Panc1 (cell line): ENCODE measurements at regions of chr1 and their contacts with region 1.

Region 1: DNA sequence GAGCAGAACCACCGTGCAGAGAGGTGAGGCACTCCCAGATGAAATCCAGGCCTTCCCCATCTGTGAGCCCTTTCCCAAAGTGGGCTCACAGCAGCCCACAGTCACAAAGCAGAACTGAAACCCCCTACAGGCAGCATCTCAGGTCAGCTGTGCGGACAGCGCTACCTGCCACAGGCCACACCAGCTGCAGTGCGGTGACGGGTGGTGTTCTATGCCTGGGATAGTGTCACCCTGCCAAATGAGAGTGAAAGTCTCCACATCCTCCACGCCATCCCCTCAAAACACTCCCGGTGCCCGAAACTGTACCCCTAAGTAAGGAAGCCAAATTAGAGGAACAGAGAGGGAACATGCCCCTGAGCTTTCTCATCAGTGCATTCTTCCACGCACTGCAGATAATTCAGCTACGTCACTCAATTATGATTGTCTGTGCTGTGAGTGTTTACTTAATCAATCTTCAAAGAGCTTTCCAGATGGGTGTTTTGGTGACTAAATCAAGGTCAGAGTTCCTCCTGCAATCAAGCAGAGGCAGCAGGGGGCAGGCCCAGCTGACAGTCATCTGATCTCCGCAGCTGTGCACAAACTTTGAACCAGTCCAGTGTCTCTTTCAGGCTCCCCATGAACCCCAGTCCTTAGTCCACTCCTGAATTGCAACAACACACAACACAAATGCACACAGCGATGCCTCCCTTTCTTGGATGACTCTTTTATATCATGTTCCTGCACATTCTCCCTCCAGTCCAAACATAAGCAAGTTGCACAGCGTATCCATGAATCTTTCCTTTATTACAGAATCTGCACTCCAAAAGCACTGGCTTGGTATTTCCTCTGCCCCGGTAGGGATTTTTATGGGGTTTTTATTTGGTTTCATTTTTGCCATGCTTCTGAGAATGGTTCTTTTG is 150.0 kb downstream of the TOMM20 start:
- DNase-seq: no peak
- ATAC-seq: peak; percentile 66
- H3K4me3 ChIP-seq: peak overlapping the region in 1 of 2 experiments; percentile 3; a peak in 2 of 4 replicates
- H3K27ac ChIP-seq: peak overlapping the region; percentile 100
- H3K4me1 ChIP-seq: peaks cover 92% of the 10 kb centered on the region
- H3K27me3 ChIP-seq: no peaks in the 10 kb centered on the region
- CTCF ChIP-seq: no peak

Region 2: DNA sequence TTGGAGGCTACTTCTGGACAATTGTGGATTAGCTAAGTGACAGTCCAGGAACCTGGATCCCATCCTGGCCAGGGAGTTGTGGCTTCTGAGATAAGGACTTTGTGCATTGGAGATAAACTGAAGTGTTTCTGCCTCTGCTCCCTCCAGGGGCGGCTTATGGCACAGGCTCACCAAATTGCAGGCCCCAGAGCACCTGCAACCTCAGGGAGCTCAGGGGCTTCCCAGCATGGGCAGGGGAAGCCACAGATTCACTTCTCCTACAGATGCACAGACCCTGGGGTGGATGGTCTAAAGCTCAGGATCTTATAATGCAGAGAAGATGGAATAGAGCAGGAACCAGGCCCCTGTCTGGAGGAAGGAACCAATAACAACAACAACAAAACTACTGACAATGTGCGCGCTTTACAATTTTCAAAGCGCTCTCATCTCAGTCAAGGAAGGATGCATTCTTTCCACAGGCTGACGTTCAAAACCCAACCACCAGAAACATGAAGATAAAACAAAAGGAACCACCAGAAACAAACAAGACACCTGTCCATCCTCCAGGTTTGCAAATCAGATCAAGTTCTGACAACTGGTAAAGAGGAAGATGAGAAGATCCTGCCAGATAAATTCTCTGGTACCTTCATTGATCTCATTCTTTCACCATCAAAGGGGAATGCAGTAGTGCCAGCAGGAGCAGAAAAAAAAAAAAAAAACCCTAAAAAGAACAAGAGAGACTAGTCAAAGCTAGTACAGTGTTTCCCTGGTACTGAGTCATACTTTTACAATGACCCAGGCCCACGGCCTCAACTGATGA is 247.7 kb before region 1 on chr1:
- CTCF ChIA-PET with region 1: no interaction called
- POLR2A ChIA-PET with region 1: no interaction called
- in situ Hi-C with region 1: loop called (anchors 25 kb)
- intact Hi-C with region 1: no loop called
- DNase-seq: no peak
- ATAC-seq: peak; percentile 12
- H3K4me3 ChIP-seq: no peak overlapping the region
- H3K27ac ChIP-seq: peak overlapping the region; percentile 95
- H3K4me1 ChIP-seq: peaks cover 39% of the 10 kb centered on the region
- H3K27me3 ChIP-seq: no peaks in the 10 kb centered on the region
- CTCF ChIP-seq: no peak

Region 3: GRCh38 chr1:235045034-235045720 is 66.5 kb after region 1 on chr1:
- CTCF ChIA-PET with region 1: no interaction called
- POLR2A ChIA-PET with region 1: interaction called, 12 read pairs
- in situ Hi-C with region 1: no loop called
- intact Hi-C with region 1: no loop called
- DNase-seq: no peak
- ATAC-seq: no peak; the same call in 1 of the 2 replicates
- H3K4me3 ChIP-seq: no peak overlapping the region
- H3K27ac ChIP-seq: peak overlapping the region; percentile 67
- H3K4me1 ChIP-seq: peaks cover 18% of the 10 kb centered on the region
- H3K27me3 ChIP-seq: no peaks in the 10 kb centered on the region
- CTCF ChIP-seq: no peak

Region 4: DNA sequence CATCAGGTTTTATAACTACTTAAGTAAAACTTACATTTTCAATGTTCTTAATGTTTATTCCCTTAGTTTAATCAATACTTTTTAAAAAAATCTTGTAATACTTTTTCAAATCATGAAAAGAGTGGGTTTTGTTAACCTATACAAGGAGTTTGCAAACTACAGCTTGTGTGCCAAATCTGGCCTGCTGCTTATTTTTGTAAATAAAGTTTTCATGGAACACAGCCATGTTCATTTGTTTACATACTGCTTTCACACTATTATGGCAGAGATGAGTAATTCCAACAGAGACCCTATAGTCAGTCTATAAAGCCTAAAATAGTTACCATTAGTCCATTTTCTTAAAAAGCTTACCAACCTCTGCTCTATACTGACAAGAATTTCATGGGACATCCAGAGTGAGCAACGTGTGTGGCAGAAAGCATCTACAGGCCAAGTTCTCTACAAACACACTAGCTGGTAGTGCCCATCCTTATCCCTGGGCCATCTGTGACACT is 1260.5 kb after region 1 on chr1:
- CTCF ChIA-PET with region 1: interaction called, 10 read pairs
- POLR2A ChIA-PET with region 1: no interaction called
- in situ Hi-C with region 1: no loop called
- intact Hi-C with region 1: no loop called
- DNase-seq: no peak
- ATAC-seq: no peak
- H3K4me3 ChIP-seq: no peak overlapping the region
- H3K27ac ChIP-seq: no peak overlapping the region
- H3K4me1 ChIP-seq: 0 out of 2 replicates have a peak, but pooled peaks cover 3% of the 10 kb centered on the region
- H3K27me3 ChIP-seq: no peaks in the 10 kb centered on the region
- CTCF ChIP-seq: no peak